Gastrocnemius medialis (tissue), 4 donors: ENCODE measurements at regions of chr11 and their contacts with region 1.

Region 1: DNA sequence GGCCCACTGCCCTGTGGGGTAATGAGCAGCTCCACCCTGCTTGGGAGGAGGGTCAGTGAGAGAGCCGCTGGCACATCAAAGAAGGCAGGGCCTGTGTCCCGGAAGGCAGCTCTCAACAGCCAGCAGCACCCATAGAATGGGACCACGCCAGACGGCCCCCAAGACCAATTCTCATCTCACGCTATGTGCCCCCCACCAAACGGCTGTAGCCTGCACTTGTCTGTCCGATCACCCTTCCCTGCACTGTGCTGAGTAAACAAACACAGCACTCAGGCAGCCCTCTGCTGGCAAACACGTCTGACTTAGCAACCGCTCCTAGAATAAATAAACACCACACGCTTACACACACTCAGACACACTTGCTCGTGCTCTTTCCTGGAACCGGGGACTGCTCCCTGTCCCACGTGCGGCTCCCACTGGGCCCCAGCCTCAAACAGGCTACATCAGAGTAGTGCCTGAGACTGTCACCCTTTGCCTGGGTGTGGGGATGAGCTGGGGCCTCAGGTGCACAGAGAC is 53.2 kb upstream of the CDON start:
- DNase-seq: peak; percentile 41 to 67
- ATAC-seq: peak; percentile 51 to 72
- H3K4me3 ChIP-seq: no peak overlapping the region
- H3K27ac ChIP-seq: peak overlapping the region; percentile 77 to 87 (median 83)
- H3K4me1 ChIP-seq: peaks cover 47 to 55% of the 10 kb centered on the region in 2 donors
- H3K27me3 ChIP-seq: no peaks in the 10 kb centered on the region
- CTCF ChIP-seq: peak in 4 of 5 experiments; percentile 17 to 33 (median 30)
- POLR2A ChIP-seq: no peak

Region 2: DNA sequence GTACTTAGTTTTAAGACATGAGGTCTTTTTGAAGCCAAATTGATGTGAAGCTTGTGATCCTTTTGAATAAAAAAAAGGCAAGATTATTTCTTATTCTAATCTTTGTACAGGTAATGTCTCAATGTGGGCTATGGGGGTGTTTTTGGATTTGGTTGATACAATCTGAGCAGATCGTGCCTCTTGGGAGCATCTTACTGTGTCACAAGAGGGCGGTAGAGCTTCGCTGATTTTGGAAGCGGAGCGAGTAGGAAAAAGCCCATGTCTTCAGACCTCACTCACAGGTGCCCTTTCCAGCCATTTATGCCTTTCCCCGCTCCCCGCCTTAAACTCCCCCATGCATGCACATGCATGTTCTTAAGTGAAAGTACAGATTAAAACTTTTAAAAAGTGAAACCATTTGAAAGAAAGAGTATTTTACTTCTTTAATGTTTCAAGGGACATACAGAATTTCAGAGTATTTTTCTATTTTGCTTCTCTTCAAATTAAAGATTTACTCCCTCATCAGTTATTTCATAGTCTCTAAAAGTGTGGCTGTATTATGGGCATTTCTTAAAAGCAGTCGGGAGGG is 192.8 kb before region 1 on chr11:
- in situ Hi-C with region 1: no loop called
- intact Hi-C with region 1: loop called (anchors 5 kb)
- DNase-seq: peak in 1 of 2 donors; percentile 44
- ATAC-seq: peak; percentile 91 to 93
- H3K4me3 ChIP-seq: no peak overlapping the region
- H3K27ac ChIP-seq: no peak overlapping the region
- H3K4me1 ChIP-seq: no peaks in the 10 kb centered on the region
- H3K27me3 ChIP-seq: peaks cover 0 to 3% (median 0%) of the 10 kb centered on the region in 3 donors
- CTCF ChIP-seq: peak; percentile 38 to 74 (median 64)
- POLR2A ChIP-seq: no peak

Region 3: GRCh38 chr11:126062679-126063506 is 53.0 kb before region 1 on chr11 and contains the start of gene CDON:
- in situ Hi-C with region 1: no loop called
- intact Hi-C with region 1: loop called (anchors 1 kb)
- DNase-seq: peak; percentile 84 to 87
- ATAC-seq: peak; percentile 95 to 96
- H3K4me3 ChIP-seq: peak within 1 kb of the TSS; percentile 65 to 84 (median 74)
- H3K27ac ChIP-seq: peak within 1 kb of the TSS; percentile 64 to 83 (median 68)
- H3K4me1 ChIP-seq: peaks cover 9 to 11% of the 10 kb centered on the region in 2 donors
- H3K27me3 ChIP-seq: peaks cover 0 to 7% (median under 1%) of the 10 kb centered on the region in 3 donors
- CTCF ChIP-seq: peak in 1 of 5 experiments; percentile 25
- POLR2A ChIP-seq: peak in 1 of 2 donors; percentile 27
- total RNA-seq, gene CDON: 1.0 to 2.0 (median 1.8) TPM

Region 4: DNA sequence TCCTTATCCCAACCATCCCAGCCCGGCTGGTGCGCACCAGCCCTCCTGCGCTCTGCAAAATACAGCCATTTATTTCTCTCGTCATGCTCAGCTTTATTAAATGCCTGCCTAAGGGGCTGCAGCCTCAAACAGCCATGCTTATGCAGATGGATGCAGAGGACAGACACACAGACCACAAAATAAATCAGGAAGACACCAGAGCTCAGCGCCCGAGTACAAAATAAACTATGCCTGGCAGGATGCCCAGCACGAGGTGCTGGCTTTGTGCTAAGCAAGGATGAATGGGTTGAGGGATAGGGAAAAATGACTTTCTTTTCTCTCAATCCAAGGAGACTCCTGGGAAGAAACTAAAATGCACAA is 25.0 kb after region 1 on chr11:
- in situ Hi-C with region 1: no loop called
- intact Hi-C with region 1: no loop called
- DNase-seq: no peak
- ATAC-seq: no peak
- H3K4me3 ChIP-seq: no peak overlapping the region
- H3K27ac ChIP-seq: no peak overlapping the region
- H3K4me1 ChIP-seq: peaks cover 0 to 7% of the 10 kb centered on the region in 2 donors
- H3K27me3 ChIP-seq: peaks cover 10 to 11% (median 10%) of the 10 kb centered on the region in 3 donors
- CTCF ChIP-seq: no peak
- POLR2A ChIP-seq: no peak

Region 5: GRCh38 chr11:126202646-126203359 is 86.9 kb after region 1 on chr11:
- in situ Hi-C with region 1: loop called in 1 of 4 experiments (anchors 10 kb)
- intact Hi-C with region 1: loop called (anchors 5 kb)
- DNase-seq: peak in 1 of 2 donors; percentile 51
- ATAC-seq: peak in 1 of 2 donors; percentile 40
- H3K4me3 ChIP-seq: peak overlapping the region in 1 of 4 donors; percentile 22
- H3K27ac ChIP-seq: peak overlapping the region; percentile 71 to 95 (median 92)
- H3K4me1 ChIP-seq: peaks cover 68 to 85% of the 10 kb centered on the region in 2 donors
- H3K27me3 ChIP-seq: no peaks in the 10 kb centered on the region
- CTCF ChIP-seq: no peak
- POLR2A ChIP-seq: no peak

Region 6: DNA sequence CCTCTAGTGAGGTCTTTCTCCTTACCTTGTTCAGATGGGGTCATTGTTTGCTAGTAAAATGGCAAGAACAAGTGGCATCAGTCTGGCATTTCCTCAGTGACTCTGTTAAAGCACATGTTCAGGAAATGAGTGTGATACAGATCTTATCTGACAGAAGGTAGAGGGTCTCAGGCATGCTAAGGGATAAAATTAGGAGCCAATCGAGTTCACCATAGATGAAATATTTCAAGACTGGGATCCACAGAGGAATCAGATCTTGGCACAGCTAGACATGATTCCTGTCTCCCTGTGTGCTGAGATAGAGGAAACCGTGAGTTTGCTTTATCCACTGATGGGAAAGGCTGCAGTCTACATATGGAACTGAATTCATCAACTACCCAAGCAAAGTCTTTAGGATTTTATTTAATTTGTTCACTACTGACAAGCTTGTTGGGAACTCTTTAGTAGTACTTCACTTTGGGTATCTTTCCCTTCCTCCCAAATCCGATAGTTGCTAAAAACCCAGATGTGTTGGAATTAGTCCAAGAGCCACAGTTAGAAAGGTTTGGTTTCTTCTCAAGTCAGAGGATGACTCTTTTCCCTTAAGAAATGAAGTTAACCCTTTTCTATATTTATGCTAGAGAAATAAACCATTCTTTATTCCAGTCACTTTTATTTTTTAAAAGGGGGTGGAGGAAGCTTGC is 114.1 kb after region 1 on chr11:
- in situ Hi-C with region 1: no loop called
- intact Hi-C with region 1: no loop called
- DNase-seq: no peak
- ATAC-seq: no peak
- H3K4me3 ChIP-seq: no peak overlapping the region
- H3K27ac ChIP-seq: no peak overlapping the region
- H3K4me1 ChIP-seq: peaks cover 12 to 20% of the 10 kb centered on the region in 2 donors
- H3K27me3 ChIP-seq: no peaks in the 10 kb centered on the region
- CTCF ChIP-seq: no peak
- POLR2A ChIP-seq: no peak